ENCODE measurements at regions of chr3 and their contacts with region 1.

Region 1: DNA sequence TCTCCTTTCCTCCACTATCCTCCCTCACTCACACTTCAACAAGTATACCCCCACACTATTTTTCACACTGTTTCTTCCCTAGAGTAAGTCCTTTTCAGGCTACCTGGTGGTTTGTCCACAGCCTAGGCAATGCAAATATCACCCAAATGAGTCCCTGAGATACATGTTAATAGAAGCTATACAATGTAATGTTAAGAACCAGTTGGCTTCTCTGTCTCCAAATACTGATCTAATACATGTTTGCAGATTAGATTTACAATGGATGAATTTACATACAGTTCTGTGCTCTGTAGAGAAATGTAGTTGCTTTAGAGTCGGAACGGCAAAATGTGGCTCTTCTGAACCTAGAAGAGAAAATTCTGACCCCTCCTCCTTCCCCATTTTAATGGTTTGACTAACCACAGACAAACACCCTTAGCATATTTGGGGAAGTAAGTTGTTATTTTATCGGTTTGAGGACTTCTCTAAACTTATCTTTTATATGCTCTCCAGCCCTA is 63.6 kb upstream of the MBNL1 start:
- H3K4me3 Mint-ChIP-seq: peak overlapping the region; percentile 98
- H3K27ac Mint-ChIP-seq: peak overlapping the region; percentile 100
- H3K4me1 Mint-ChIP-seq: peaks cover 40% of the 10 kb centered on the region
- H3K27me3 Mint-ChIP-seq: no peaks in the 10 kb centered on the region

Region 2: GRCh38 chr3:152073267-152073666 is 131.9 kb before region 1 on chr3:
- intact Hi-C with region 1: no loop called
- H3K4me3 Mint-ChIP-seq: no peak overlapping the region
- H3K27ac Mint-ChIP-seq: no peak overlapping the region
- H3K4me1 Mint-ChIP-seq: no peaks in the 10 kb centered on the region
- H3K27me3 Mint-ChIP-seq: no peaks in the 10 kb centered on the region

Region 3: DNA sequence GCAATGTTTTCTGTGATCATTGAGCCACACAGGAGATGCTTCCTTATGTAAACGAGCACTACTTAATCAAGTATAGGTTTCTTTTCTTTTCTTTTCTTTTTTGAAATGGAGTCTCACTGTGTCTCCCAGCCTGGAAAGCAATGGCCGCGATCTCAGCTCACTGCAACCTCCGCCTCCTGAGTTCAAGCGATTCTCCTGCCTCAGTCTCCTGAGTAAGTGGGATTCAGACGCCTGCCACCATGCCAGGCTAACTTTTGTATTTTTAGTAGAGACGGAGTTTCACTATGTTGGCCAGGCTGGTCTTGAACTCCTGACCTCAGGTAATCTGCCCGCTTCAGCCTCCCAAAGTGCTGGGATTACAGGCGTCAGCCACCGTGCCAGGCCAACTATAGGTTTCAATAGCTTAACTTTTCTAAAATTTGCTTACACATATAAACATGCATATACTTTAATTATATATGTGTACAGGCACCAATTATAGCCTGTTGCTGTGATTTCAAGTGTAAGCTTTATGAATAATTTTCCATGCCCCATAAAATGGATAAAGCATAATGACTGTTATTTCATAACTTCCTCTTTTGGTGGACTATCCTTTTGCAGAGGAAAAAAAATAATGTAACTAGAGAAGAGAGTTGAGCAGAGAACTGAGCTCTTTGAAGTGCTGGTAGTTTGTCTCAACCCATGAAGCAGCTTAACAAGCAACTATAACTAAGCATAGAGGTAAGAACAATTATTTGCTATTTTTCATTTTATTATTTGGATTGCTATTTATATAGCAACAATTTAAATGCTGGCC is 38.8 kb after region 1 on chr3:
- intact Hi-C with region 1: loop called (anchors 2 kb)
- H3K4me3 Mint-ChIP-seq: peak overlapping the region; percentile 77
- H3K27ac Mint-ChIP-seq: peak overlapping the region; percentile 91
- H3K4me1 Mint-ChIP-seq: peaks cover 27% of the 10 kb centered on the region
- H3K27me3 Mint-ChIP-seq: no peaks in the 10 kb centered on the region

Region 4: DNA sequence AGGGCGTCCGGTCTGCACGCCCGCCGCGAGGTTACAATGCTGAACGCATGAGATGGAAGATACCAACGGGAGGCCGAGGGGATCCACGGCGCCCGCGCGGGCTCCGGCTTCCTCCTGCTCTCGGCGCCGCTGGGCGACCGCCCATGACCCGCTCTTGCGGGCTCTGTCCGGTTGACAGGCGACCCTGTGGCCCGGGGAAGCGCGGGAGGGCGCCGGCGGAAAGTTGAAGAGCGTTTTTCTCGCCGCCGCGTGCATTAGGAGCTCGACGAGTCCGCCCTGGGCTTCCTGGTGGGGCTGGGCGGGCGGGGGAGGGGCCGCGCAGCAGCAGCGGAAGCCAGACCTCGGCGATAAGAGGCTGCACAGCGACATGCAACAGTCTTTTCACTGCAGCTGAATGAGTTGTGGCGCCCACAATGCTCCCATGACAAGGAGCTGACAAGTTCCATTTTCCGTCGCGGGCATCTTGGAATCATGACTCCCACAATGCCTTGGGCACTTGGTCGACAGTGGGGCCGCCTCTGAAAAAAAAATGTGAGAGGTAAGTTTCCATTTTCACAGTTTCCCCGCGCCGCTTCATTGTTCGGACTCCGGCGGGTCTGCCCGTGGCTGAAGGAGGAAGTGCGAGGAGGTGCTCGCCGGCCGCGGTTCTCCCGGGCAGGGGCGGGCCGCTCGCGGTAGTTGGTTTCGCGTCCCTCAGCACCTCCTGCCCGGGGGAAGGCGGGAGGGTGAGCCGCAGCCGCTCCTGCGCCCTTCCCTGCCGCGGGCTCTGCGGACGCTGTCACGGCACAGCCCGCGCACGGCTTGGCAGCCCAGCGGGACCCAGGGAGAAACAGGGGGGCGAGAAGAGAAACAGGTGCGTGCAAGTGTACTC is 63.6 kb after region 1 on chr3 and contains the start of gene MBNL1:
- intact Hi-C with region 1: loop called (anchors 2 kb)
- H3K4me3 Mint-ChIP-seq: peak within 1 kb of the TSS; percentile 96
- H3K27ac Mint-ChIP-seq: peak within 1 kb of the TSS; percentile 97
- H3K4me1 Mint-ChIP-seq: peaks cover 51% of the 10 kb centered on the region
- H3K27me3 Mint-ChIP-seq: no peaks in the 10 kb centered on the region

Region 5: GRCh38 chr3:152376351-152377183 is 171.4 kb after region 1 on chr3:
- intact Hi-C with region 1: loop called (anchors 5 kb)
- H3K4me3 Mint-ChIP-seq: peak overlapping the region; percentile 30
- H3K27ac Mint-ChIP-seq: peak overlapping the region; percentile 79
- H3K4me1 Mint-ChIP-seq: peaks cover 56% of the 10 kb centered on the region
- H3K27me3 Mint-ChIP-seq: no peaks in the 10 kb centered on the region

Measured in dendritic cell treated with granulocyte-macrophage colony-stimulating factor and Interleukin-4, amounts not matched to agents 40 ng/mL and 50 ng/mL, for 4 days (primary cell).